CD8-positive, alpha-beta T cell (primary cell): ENCODE measurements at regions of chr22 and their contacts with region 1.

Region 1: DNA sequence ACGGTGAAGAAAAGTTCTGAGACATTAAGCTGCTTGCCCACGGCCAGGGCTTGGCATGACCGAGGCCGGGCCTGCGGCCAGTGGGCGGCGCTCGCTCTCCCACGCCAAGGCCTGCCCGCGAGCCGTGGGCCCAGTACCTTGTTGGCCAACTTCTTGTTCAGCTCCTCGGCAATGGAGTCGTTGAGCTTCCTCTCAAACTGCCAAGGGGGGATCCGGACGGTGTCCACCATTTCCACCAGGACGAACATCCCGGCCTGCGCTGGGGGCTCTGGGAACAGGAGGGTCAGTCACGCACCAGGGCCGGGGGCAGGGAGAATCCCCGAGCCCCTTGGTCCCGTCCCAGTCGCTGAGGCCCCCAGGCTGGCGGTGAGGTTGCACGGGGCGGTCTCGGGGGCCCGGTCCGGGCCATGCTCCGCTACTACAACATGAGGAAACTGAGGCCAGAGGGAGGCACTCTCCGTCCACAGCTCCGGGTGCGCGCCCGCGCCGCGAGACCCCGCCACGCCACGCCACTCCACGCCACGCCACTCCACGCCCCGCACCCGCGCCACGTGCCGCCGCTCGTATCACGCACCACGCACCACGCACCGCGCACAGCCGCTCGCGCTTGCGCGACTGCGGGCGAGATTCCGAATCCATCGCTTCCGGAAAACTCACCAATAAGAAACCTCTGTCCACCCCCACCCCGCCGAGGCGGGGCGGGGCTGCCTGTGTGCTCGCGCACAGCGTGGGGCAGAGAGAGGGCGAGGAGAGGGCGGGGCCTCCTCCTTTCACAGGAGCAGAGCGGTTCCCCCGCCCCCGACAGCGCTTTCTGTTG is at the start of gene POLR3H:
- DNase-seq: peak; percentile 92 to 99 (median 97)
- ATAC-seq: peak; percentile 98
- H3K4me3 ChIP-seq: peak within 1 kb of the TSS; percentile 75 to 95
- H3K4me3 Mint-ChIP-seq: peak within 1 kb of the TSS; percentile 98
- H3K27ac ChIP-seq: peak within 1 kb of the TSS; percentile 82 to 83
- H3K27ac Mint-ChIP-seq: peak within 1 kb of the TSS; percentile 94
- H3K4me1 ChIP-seq: peaks cover 30% of the 10 kb centered on the region
- H3K4me1 Mint-ChIP-seq: peaks cover 40% of the 10 kb centered on the region
- H3K27me3 ChIP-seq: no peaks in the 10 kb centered on the region
- H3K27me3 Mint-ChIP-seq: no peaks in the 10 kb centered on the region
- CTCF ChIP-seq: no peak
- total RNA-seq, gene POLR3H: 11.2 to 11.7 TPM

Region 2: DNA sequence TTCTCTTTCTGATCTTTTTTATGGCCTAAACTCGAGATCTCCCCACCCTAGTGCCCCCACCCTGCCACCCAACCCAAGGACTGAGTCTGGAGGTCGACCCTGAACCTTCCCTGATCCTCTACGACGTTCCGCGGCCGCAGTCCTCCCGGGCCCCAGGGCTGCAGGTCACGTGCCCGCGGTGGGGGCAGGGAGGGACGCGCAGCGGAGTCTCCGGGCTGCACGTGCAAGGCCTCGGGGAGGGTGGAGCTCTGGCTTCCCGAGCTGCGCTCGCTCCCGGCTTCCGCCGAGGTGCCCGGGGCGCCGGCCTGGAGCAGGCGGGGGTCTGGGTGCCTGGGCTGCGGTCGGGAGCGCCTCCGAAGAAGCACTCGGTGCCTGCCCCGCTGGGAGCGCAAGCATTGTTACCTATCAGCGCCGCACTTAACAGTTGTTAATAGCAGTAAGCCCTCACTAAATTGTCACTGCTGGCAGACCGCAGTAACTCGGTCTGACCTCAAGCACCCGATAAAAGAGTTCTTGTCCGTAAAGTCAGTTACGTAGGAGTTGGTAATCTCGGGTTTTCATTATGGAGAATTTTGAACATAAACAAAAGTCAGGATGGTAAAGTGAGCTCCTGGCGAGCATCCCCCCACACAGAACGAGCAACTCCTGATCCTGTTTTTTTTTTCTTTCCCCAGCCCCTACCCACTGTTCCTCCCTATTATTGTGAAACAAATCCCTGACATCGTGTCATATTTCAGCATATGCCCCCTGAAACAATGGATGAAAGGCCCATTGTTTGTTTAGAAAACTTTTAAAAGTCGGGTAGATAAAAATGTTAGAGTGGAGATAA is 521.4 kb before region 1 on chr22:
- CTCF ChIA-PET with region 1: no interaction called
- POLR2A ChIA-PET with region 1: no interaction called
- intact Hi-C with region 1: loop called in 1 of 2 experiments (anchors 5 kb)
- DNase-seq: peak; percentile 46 to 89 (median 80)
- ATAC-seq: peak; percentile 77
- H3K4me3 ChIP-seq: peak overlapping the region; percentile 60 to 77
- H3K4me3 Mint-ChIP-seq: peak overlapping the region; percentile 81
- H3K27ac ChIP-seq: peak overlapping the region; percentile 74 to 84
- H3K27ac Mint-ChIP-seq: peak overlapping the region; percentile 84
- H3K4me1 ChIP-seq: peaks cover 12% of the 10 kb centered on the region
- H3K4me1 Mint-ChIP-seq: peaks cover 14% of the 10 kb centered on the region
- H3K27me3 ChIP-seq: peaks cover 0 to 4% of the 10 kb centered on the region in 2 experiments
- H3K27me3 Mint-ChIP-seq: no peaks in the 10 kb centered on the region
- CTCF ChIP-seq: no peak

Region 3: GRCh38 chr22:41589391-41590241 is 45.6 kb after region 1 on chr22 and contains the start of gene PMM1:
- CTCF ChIA-PET with region 1: interaction called, 6 read pairs
- POLR2A ChIA-PET with region 1: interaction called, 4 read pairs
- intact Hi-C with region 1: loop called (anchors 1 kb)
- DNase-seq: peak; percentile 100
- ATAC-seq: peak; percentile 97
- H3K4me3 ChIP-seq: peak within 1 kb of the TSS; percentile 94 to 98
- H3K4me3 Mint-ChIP-seq: peak within 1 kb of the TSS; percentile 92
- H3K27ac ChIP-seq: peak within 1 kb of the TSS; percentile 50 to 75
- H3K27ac Mint-ChIP-seq: peak within 1 kb of the TSS; percentile 88
- H3K4me1 ChIP-seq: peaks cover 17% of the 10 kb centered on the region
- H3K4me1 Mint-ChIP-seq: peaks cover 20% of the 10 kb centered on the region
- H3K27me3 ChIP-seq: no peaks in the 10 kb centered on the region
- H3K27me3 Mint-ChIP-seq: no peaks in the 10 kb centered on the region
- CTCF ChIP-seq: no peak
- total RNA-seq, gene PMM1: 19.1 to 22.4 TPM

Region 4: GRCh38 chr22:41596776-41597634 is 52.9 kb after region 1 on chr22:
- CTCF ChIA-PET with region 1: interaction called, 3 read pairs
- POLR2A ChIA-PET with region 1: no interaction called
- intact Hi-C with region 1: loop called in 1 of 2 experiments (anchors 2 kb)
- DNase-seq: peak in 6 of 9 experiments; percentile 4 to 53 (median 36)
- ATAC-seq: peak; percentile 64
- H3K4me3 ChIP-seq: no peak overlapping the region
- H3K4me3 Mint-ChIP-seq: no peak overlapping the region
- H3K27ac ChIP-seq: no peak overlapping the region
- H3K27ac Mint-ChIP-seq: no peak overlapping the region
- H3K4me1 ChIP-seq: no peaks in the 10 kb centered on the region
- H3K4me1 Mint-ChIP-seq: peaks cover 2% of the 10 kb centered on the region
- H3K27me3 ChIP-seq: no peaks in the 10 kb centered on the region
- H3K27me3 Mint-ChIP-seq: no peaks in the 10 kb centered on the region
- CTCF ChIP-seq: peak; percentile 45

Region 5: DNA sequence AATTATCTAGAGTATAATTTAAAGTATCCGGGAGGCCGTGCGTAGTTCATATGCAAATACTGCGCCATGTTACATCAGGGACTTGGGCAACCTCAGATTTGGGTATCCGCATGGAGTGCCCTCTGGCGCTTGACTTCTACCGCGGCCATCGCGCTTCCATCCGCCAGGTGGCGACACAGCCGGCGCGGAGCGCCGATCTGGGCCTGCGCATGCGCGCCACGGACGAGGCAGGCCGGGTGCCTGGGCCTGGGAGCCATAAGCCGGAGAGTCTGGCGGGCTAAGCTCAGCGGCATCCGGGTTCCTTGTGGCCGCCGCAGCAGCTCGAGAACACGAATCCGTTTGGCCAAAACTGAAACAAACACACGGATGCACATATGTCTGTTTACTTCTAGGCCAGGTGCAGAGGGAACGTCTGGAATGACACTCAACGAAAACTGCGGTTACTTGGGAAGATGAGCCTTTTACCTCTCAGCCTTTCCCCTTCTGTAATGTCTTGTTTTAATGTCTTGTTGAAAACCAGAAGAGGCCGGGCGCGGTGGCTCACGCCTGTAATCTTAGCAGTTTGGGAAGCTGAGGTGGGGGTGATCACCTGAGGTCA is 122.7 kb after region 1 on chr22:
- CTCF ChIA-PET with region 1: no interaction called
- POLR2A ChIA-PET with region 1: no interaction called
- intact Hi-C with region 1: no loop called
- DNase-seq: peak; percentile 89 to 97 (median 92)
- ATAC-seq: peak; percentile 94
- H3K4me3 ChIP-seq: peak overlapping the region; percentile 30 to 46
- H3K4me3 Mint-ChIP-seq: peak overlapping the region; percentile 84
- H3K27ac ChIP-seq: peak overlapping the region; percentile 57 to 85
- H3K27ac Mint-ChIP-seq: peak overlapping the region; percentile 96
- H3K4me1 ChIP-seq: peaks cover 9% of the 10 kb centered on the region
- H3K4me1 Mint-ChIP-seq: peaks cover 7% of the 10 kb centered on the region
- H3K27me3 ChIP-seq: no peaks in the 10 kb centered on the region
- H3K27me3 Mint-ChIP-seq: no peaks in the 10 kb centered on the region
- CTCF ChIP-seq: peak; percentile 94